Prostate gland (tissue), 2 donors: ENCODE measurements at regions of chr17 and their contacts with region 1.

Region 1: DNA sequence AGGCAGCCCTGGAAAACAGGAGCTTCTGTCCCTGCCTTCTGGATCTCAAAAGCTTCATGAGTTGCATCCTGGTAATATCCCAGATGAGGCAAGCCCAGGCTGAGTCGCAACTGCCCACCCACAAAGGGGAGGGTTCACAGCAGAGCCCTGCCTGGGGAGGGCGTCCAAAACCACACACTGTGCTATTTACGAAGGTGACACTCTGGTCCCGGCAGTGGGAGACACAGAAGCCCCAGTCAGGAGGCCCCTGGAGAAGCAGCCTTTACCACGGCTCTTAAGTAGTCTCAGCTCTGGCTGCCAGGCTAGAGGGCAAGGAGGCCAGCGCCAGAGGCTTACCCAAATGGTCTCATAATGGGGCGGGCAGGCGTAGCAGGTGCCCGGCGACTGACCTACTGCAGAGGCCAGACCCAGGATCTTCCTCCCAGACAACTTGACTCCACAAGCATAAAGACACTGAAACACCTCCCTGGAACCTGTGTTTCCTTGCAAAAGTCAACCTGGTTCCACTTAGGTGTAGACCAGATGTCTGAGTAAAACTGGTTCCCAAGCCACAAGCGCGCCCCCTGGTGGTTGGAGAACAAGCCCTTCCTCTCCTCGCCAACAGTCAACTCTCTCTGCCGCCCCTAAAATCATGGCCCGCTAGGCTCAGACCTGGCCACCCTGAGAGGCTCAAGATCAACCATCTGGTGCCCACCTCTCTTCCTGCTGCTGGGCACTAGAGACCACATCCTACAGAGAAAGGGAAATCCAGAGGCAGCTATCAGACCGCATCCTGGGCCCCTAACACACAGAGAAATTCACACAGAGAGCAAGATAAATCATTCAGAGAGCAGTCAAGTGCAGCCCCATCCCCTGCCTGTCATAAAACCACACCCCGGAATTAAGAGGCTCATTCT is 5.2 kb downstream of the AXIN2 start:
- DNase-seq: peak; percentile 79
- H3K4me3 ChIP-seq: peak overlapping the region in 1 of 2 donors; percentile 83
- H3K27ac ChIP-seq: peak overlapping the region; percentile 24 to 94
- H3K4me1 ChIP-seq: peaks cover 5% of the 10 kb centered on the region
- H3K27me3 ChIP-seq: no peaks in the 10 kb centered on the region
- CTCF ChIP-seq: peak; percentile 67 to 87 (median 78)
- POLR2A ChIP-seq: no peak

Region 2: DNA sequence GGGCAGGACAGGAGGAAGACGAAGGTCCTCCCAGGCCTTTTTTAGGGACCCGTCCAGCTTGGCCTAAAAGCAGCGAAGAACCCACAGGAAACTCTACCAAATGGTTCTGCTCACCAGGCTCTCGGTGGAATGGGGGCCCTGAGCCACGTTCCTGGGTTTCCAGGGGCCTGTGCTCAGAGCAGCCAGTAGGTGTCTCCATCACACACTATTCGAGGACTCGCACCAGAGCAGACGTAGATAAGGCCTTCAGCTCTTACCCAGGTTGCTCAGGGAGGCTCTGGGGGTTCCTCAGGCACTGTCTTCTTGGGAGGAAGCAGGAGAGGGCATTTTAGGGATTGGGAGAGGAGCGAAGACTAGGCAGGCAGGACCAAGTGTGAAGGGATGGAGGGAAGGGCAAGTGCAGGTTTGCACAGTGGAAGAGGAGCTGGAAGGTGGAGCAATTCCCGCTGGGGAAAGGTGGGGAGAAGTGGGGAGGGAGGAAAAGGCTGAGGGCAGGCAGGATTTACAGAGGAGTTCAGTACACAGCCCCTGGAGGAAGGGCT is 262.0 kb before region 1 on chr17:
- intact Hi-C with region 1: loop called (anchors 5 kb)
- DNase-seq: peak; percentile 51
- H3K4me3 ChIP-seq: no peak overlapping the region
- H3K27ac ChIP-seq: no peak overlapping the region
- H3K4me1 ChIP-seq: no peaks in the 10 kb centered on the region
- H3K27me3 ChIP-seq: no peaks in the 10 kb centered on the region
- CTCF ChIP-seq: peak in 3 of 4 experiments; percentile 59 to 76 (median 74)
- POLR2A ChIP-seq: no peak

Region 3: GRCh38 chr17:65463242-65463641 is 93.0 kb before region 1 on chr17:
- intact Hi-C with region 1: loop called (anchors 2 kb)
- DNase-seq: peak; percentile 13
- H3K4me3 ChIP-seq: no peak overlapping the region
- H3K27ac ChIP-seq: no peak overlapping the region
- H3K4me1 ChIP-seq: no peaks in the 10 kb centered on the region
- H3K27me3 ChIP-seq: no peaks in the 10 kb centered on the region
- CTCF ChIP-seq: no peak
- POLR2A ChIP-seq: no peak

Region 4: GRCh38 chr17:65515959-65516948 is 40.0 kb before region 1 on chr17:
- intact Hi-C with region 1: loop called (anchors 5 kb)
- DNase-seq: no peak
- H3K4me3 ChIP-seq: no peak overlapping the region
- H3K27ac ChIP-seq: no peak overlapping the region
- H3K4me1 ChIP-seq: no peaks in the 10 kb centered on the region
- H3K27me3 ChIP-seq: no peaks in the 10 kb centered on the region
- CTCF ChIP-seq: no peak
- POLR2A ChIP-seq: no peak

Region 5: DNA sequence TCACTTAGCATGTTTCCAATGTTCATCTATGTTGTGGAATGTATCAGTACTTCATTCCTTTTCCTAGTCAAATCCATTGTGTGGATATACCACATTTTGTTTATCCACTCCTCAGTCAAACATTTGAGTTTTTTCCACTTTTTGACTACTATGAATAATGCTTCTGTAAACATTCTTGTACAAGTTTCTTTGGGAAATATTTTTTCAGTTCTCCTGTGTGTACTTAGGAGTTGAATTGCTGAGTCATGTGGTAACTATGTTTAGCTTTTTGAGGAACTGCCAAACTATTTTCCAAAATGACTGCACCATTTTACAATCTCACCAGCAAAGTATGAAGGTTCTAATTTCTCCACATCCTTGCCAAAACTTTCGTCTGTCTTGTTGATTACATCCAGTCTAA is 228.8 kb after region 1 on chr17:
- intact Hi-C with region 1: loop called (anchors 5 kb)
- DNase-seq: peak; percentile 33
- H3K4me3 ChIP-seq: no peak overlapping the region
- H3K27ac ChIP-seq: peak overlapping the region; percentile 29 to 48
- H3K4me1 ChIP-seq: no peaks in the 10 kb centered on the region
- H3K27me3 ChIP-seq: no peaks in the 10 kb centered on the region
- CTCF ChIP-seq: no peak
- POLR2A ChIP-seq: no peak